ENCODE measurements at regions of chr1 and their contacts with region 1.

Region 1: DNA sequence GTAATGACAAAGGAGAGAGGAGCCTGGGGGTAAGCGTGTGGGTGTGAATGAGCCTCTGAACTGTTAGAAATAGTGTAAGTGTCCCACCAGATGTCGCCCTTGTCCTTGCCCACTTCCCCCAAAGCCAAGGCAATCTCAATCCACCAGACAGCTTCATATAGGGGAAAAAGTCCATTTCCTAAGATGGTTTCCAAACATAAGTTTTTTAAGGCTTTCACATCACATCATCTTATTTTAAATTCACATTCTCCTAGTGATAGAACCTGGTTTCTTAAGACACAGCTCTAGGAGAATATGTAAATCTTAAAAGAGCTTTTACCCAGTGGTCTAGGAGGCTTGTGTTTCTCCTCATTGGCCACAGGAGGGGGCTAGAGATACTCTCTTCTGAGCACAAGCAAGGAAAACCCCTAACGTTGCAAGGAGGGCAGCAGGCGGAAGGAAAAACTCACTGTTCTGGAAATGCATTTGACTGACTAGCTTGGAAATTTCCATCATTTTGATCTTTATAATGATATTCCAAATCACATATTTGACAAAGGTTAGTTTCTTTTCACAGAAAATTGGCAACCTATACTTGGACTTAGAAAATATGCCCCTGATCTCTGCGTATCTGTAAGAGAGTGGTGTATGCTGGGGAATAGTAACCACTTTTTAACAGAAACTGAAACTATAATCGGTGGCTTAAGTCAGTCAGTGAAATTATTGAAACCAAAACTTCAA is 51.9 kb upstream of the LPAR3 start:
- ATAC-seq: peak; percentile 94 to 99 (median 98)
- H3K4me3 ChIP-seq: peak overlapping the region in 1 of 5 donors; percentile 2
- H3K27ac ChIP-seq: no peak overlapping the region
- H3K4me1 ChIP-seq: peaks cover 0 to 3% of the 10 kb centered on the region in 2 donors

Region 2: DNA sequence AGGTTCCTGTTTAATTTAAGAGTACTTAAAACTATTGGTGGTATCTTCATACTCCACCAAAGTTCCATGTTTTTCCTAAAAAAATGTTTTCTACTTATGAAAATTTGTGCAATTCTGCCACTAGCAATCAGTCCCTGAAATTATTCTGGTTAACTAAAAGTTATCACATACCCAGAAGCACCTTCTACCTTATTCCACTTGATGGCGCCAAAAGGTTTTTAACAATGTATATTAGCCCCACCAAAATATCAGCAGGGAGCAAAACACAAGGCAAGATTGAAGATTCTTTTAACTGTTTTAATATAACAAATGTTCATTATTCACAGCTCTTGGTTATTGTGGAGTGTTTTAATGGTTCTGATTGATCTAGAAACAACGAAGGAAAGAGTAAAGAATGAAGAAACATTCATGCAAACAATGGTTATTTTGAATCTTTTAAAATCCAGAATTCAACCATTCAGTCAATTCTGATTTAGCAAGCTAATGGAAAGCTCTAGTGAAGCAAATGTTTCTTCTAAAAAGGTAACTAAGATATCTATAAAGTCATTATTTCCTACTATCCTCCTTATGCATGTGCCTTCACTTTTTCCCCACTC is 1013.2 kb before region 1 on chr1:
- in situ Hi-C with region 1: loop called in 1 of 9 experiments (anchors 25 kb)
- ATAC-seq: peak; percentile 51 to 78 (median 67)
- H3K4me3 ChIP-seq: no peak overlapping the region
- H3K27ac ChIP-seq: no peak overlapping the region
- H3K4me1 ChIP-seq: no peaks in the 10 kb centered on the region

Region 3: GRCh38 chr1:84478876-84479868 is 465.8 kb before region 1 on chr1 and contains the start of gene RPF1:
- in situ Hi-C with region 1: loop called in 2 of 9 experiments (anchors 25 kb)
- ATAC-seq: peak; percentile 97 to 99 (median 98)
- H3K4me3 ChIP-seq: peak within 1 kb of the TSS; percentile 77 to 100 (median 93)
- H3K27ac ChIP-seq: peak within 1 kb of the TSS; percentile 74 to 91
- H3K4me1 ChIP-seq: peaks cover 13 to 14% of the 10 kb centered on the region in 2 donors
- total RNA-seq, gene RPF1: 38.7 to 77.5 (median 54.8) TPM

Region 4: DNA sequence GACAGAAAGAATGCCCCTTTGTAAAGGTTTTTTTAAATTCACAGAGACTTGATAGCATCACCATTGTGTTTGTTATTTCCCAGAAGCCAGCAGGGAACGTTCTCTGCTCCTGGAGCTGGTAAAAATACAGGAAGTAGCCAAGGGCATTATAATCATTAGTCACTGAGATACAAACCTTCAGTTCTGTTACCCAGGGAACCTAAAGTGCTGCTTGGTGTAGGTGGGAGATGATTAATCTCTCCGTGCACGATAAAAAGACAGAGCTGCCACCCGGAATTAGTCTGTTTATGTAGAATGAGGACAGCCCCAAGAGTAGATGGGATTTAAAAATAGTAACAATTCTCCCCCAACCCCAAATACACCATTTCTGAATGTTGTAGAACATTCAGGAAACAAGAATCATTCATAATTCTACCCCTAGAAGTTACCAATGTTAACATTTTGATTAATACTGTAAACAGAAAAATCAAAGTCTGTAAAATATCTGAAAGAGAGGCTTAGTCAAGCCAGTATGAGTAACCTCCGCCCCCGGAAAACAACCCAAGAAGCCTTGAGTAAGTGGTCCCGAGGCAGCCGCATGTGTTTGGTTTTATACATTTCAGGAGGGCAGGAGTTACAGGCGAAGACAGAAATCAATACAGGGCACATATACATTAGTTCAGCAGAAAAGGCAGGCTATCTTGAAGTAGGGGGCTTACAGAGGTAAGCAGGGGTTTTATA is 325.4 kb before region 1 on chr1:
- in situ Hi-C with region 1: no loop called
- ATAC-seq: peak in 7 of 8 experiments; percentile 8 to 77 (median 67)
- H3K4me3 ChIP-seq: no peak overlapping the region
- H3K27ac ChIP-seq: peak overlapping the region in 1 of 2 donors; percentile 32
- H3K4me1 ChIP-seq: peaks cover 18 to 25% of the 10 kb centered on the region in 2 donors

Region 5: DNA sequence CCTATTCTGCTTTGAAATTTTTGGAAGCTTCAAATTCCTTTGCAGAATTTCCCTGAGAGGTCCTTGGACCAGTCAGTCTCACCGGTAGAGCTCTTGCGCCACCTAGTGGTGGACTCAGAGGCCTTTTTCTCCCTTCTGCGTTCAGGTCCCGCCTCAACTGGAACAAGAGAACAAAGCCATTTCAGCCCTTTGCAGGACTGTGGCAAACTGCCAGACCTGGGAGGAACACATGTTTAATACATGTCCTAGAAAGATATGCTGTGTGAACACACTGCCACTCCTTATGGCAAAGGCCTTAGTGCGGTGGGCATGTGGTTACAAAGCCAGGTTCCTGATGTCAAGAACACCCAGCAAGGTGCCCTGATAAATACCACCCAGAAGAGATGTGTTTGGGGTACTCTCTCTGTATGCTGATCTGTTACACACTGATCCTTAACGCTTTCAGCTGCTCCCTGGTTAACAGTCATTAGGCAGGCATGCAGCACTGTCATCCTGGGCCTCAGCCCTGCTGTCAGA is 172.4 kb before region 1 on chr1:
- in situ Hi-C with region 1: no loop called
- ATAC-seq: peak; percentile 81 to 98 (median 94)
- H3K4me3 ChIP-seq: no peak overlapping the region
- H3K27ac ChIP-seq: no peak overlapping the region
- H3K4me1 ChIP-seq: peaks cover 19 to 22% of the 10 kb centered on the region in 2 donors

Region 6: DNA sequence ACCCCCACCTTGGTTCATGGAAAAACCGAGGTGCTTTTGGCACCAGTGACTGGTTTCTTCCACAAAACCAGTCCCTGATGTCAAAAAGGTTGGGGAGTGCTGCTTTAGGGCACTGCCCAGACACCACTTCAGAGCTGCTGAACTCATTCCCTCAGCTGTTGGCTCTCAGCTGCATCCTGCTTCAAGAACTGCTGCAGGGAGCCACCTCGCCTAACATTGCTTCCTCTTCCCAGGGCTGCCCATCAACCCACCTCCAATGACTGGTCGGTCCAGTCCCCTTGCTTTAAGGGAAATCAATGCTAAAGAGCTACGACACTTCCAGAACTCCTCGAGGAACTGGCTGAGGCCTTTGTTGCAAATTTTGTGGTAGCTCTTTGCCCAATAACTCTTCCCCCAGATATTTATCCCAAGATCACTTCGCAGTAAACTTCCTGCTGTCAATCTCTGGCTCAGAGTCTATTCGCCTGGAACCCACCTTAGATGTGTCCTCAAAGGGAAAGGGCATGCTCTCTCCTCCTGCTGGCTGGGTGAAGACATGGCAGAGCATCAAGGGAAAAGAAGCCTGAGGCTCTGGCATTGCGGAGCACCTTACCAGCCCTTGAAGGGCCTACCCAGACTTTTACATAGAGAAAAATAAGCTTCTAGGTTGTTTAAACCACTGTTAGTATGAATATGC is 285.5 kb after region 1 on chr1:
- in situ Hi-C with region 1: loop called in 1 of 9 experiments (anchors 10 kb)
- ATAC-seq: peak in 1 of 8 experiments; percentile 51
- H3K4me3 ChIP-seq: no peak overlapping the region
- H3K27ac ChIP-seq: no peak overlapping the region
- H3K4me1 ChIP-seq: peaks cover 0 to 1% of the 10 kb centered on the region in 2 donors

Measured in motor neuron (in vitro differentiated cells).